AG04449 (cell line): ENCODE measurements at regions of chr6 and their contacts with region 1.

Region 1: GRCh38 chr6:151014404-151015100 is 149.1 kb downstream of the MTHFD1L start:
- DNase-seq: no peak
- H3K4me3 ChIP-seq: no peak overlapping the region; the same call in 1 of the 2 replicates
- CTCF ChIP-seq: peak; percentile 79

Region 2: GRCh38 chr6:151004415-151005024 is 10.0 kb before region 1 on chr6:
- CTCF ChIA-PET with region 1: interaction called, 24 read pairs
- POLR2A ChIA-PET with region 1: no interaction called
- DNase-seq: peak; percentile 72
- H3K4me3 ChIP-seq: no peak overlapping the region
- CTCF ChIP-seq: no peak

Region 3: DNA sequence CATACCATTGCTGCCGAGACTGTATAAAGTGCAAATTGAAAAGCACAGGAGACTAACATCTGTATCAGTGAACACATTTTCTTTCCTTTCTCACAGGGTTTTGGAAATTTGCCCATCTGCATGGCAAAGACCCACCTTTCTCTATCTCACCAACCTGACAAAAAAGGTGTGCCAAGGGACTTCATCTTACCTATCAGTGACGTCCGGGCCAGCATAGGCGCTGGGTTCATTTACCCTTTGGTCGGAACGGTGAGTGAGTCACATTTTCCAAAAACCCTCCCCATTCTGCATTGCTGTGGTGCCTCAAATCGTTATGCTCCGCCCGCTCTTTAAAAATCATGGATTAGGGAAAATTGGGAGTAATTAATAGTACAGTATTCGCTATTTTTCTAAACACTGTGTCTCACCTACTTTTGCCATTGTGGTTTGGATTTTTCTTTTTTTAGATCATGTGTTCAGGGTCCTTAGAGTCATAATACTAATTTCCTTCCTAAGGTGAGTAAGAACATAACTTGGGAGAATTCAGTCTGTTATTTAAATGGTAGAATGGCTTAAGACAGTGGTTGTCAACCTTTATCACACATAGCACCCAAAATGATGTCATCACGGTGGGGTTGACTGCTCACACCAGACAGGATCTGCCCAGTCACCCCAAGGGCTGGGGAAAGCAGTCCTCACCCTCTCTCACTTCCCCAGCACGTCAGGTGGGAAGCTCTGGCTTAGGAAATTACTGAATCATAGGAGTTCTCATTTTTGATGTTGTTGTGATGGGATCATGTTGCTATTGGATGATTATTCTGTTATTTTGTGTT is 22.5 kb after region 1 on chr6:
- CTCF ChIA-PET with region 1: interaction called, 32 read pairs
- POLR2A ChIA-PET with region 1: interaction called, 5 read pairs
- DNase-seq: no peak
- H3K4me3 ChIP-seq: no peak overlapping the region
- CTCF ChIP-seq: no peak

Region 4: GRCh38 chr6:151067684-151068596 is 53.4 kb after region 1 on chr6:
- CTCF ChIA-PET with region 1: interaction called, 18 read pairs
- POLR2A ChIA-PET with region 1: no interaction called
- DNase-seq: peak; percentile 95
- H3K4me3 ChIP-seq: no peak overlapping the region; the same call in 1 of the 2 replicates
- CTCF ChIP-seq: no peak

Region 5: GRCh38 chr6:151317103-151317994 is 302.8 kb after region 1 on chr6:
- CTCF ChIA-PET with region 1: interaction called, 573 read pairs
- POLR2A ChIA-PET with region 1: no interaction called
- DNase-seq: peak; percentile 86
- H3K4me3 ChIP-seq: no peak overlapping the region
- CTCF ChIP-seq: no peak